CD8-positive, alpha-beta T cell (primary cell): ENCODE measurements at regions of chr16 and their contacts with region 1.

Region 1: GRCh38 chr16:81521151-81521626 is 76.6 kb downstream of the CMIP start:
- DNase-seq: peak; percentile 74 to 97 (median 87)
- ATAC-seq: peak; percentile 46
- H3K4me3 ChIP-seq: peak overlapping the region in 1 of 2 experiments; percentile 13
- H3K4me3 Mint-ChIP-seq: peak overlapping the region; percentile 3
- H3K27ac ChIP-seq: peak overlapping the region; percentile 54 to 95
- H3K27ac Mint-ChIP-seq: peak overlapping the region; percentile 96
- H3K4me1 ChIP-seq: peaks cover 35% of the 10 kb centered on the region
- H3K4me1 Mint-ChIP-seq: peaks cover 52% of the 10 kb centered on the region
- H3K27me3 ChIP-seq: no peaks in the 10 kb centered on the region
- H3K27me3 Mint-ChIP-seq: no peaks in the 10 kb centered on the region
- CTCF ChIP-seq: no peak

Region 2: GRCh38 chr16:81429045-81429521 is 92.1 kb before region 1 on chr16:
- CTCF ChIA-PET with region 1: interaction called, 3 read pairs
- POLR2A ChIA-PET with region 1: no interaction called
- intact Hi-C with region 1: loop called in 1 of 2 experiments (anchors 5 kb)
- DNase-seq: peak in 3 of 9 experiments; percentile 32 to 62 (median 46)
- ATAC-seq: peak; percentile 36
- H3K4me3 ChIP-seq: no peak overlapping the region
- H3K4me3 Mint-ChIP-seq: no peak overlapping the region
- H3K27ac ChIP-seq: no peak overlapping the region
- H3K27ac Mint-ChIP-seq: no peak overlapping the region
- H3K4me1 ChIP-seq: peaks cover 5% of the 10 kb centered on the region
- H3K4me1 Mint-ChIP-seq: peaks cover 11% of the 10 kb centered on the region
- H3K27me3 ChIP-seq: no peaks in the 10 kb centered on the region
- H3K27me3 Mint-ChIP-seq: peaks cover 2% of the 10 kb centered on the region
- CTCF ChIP-seq: no peak

Region 3: DNA sequence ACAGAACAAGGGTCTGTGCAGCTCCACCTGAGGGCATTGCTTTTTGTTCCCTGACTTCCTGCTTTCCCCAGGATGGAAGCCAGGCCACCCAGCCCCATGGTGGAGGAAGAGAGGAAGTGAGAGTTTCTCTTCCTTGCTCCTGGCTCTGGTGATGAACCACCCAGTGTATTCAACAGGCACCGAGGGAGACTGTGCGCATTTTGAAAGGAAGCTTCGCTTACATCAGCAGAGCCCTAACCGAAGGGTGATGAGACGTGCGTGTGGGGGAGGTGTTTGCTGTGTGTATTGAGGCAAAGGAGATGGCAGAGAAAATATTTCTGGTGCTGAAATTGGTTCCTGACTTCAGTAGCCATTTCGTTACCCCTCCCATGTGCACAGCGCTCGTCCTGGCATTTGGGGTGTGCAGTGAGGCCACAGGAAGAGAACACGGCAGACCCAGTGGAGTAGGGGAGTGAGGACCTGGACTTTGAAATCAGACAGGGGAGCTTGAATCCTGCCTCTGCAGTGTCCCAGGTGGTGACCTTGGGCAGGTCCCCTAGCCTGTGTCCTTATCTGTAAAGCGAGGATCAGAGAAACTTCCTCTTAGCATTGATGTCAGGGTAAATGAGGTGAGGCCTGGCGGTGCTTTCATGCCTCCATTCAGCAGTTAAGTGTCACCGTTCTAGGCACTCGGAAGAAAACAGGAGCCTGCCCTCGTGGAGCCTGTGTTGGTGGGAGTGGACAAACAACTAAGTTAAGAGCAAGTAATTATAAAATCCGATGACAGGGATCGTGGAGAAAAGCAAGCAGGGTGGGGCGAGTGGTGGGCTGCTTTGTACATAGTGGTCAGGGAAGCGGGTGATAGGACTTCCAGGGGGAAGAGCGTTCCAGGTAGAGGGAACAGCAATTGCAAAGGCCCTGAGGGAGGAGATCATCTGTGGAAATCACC is 69.2 kb before region 1 on chr16:
- CTCF ChIA-PET with region 1: no interaction called
- POLR2A ChIA-PET with region 1: no interaction called
- intact Hi-C with region 1: loop called in 1 of 2 experiments (anchors 2 kb)
- DNase-seq: peak in 6 of 9 experiments; percentile 21 to 76 (median 51)
- ATAC-seq: peak; percentile 91
- H3K4me3 ChIP-seq: no peak overlapping the region
- H3K4me3 Mint-ChIP-seq: peak overlapping the region; percentile 64
- H3K27ac ChIP-seq: peak overlapping the region in 1 of 2 experiments; percentile 36
- H3K27ac Mint-ChIP-seq: peak overlapping the region; percentile 87
- H3K4me1 ChIP-seq: peaks cover 59% of the 10 kb centered on the region
- H3K4me1 Mint-ChIP-seq: peaks cover 86% of the 10 kb centered on the region
- H3K27me3 ChIP-seq: no peaks in the 10 kb centered on the region
- H3K27me3 Mint-ChIP-seq: no peaks in the 10 kb centered on the region
- CTCF ChIP-seq: no peak

Region 4: DNA sequence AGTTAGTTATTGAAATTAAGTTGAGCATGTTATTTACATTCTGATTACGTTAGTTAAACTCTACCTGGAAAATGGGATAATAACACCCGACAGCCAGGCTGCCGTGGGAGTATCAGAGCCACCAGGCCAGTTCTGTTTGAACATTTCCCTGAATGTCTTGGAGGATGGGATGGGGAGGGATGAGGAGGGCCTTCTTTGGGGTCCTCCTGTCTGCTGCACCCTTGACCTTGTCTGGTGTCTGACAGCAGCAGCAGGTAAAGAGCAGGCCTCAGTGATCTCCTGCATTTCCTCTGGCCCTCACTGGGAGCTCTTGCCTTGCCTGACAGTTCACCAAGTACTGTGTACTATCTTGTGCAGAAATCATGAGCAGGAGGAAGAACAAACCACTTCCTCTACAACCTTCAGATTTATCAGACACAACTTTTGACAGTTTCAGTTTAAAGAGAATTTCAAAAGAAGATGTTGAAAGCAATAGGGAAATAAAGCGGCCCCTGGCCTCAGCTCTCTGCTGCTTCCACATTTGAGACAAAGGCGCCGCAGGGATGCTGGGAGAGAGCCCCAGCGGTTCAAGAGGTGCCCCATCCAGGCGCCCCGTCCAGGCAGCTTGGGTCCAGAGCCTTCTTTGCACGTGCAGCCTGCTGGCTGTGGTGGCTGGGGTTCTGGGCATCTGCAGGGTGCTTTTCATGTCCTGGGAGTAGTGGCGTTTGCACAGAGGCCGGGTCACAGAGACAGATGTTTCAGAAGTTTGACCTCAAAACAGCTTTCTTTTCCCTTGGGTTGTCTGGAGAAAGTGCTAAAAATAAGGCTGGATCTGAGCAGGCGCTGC is 51.3 kb before region 1 on chr16:
- CTCF ChIA-PET with region 1: interaction called, 3 read pairs
- POLR2A ChIA-PET with region 1: interaction called, 3 read pairs
- intact Hi-C with region 1: loop called in 1 of 2 experiments (anchors 5 kb)
- DNase-seq: peak in 7 of 9 experiments; percentile 19 to 80 (median 47)
- ATAC-seq: peak; percentile 88
- H3K4me3 ChIP-seq: peak overlapping the region; percentile 28 to 36
- H3K4me3 Mint-ChIP-seq: peak overlapping the region; percentile 64
- H3K27ac ChIP-seq: peak overlapping the region; percentile 43 to 73
- H3K27ac Mint-ChIP-seq: peak overlapping the region; percentile 91
- H3K4me1 ChIP-seq: peaks cover 67% of the 10 kb centered on the region
- H3K4me1 Mint-ChIP-seq: peaks cover 77% of the 10 kb centered on the region
- H3K27me3 ChIP-seq: no peaks in the 10 kb centered on the region
- H3K27me3 Mint-ChIP-seq: no peaks in the 10 kb centered on the region
- CTCF ChIP-seq: no peak

Region 5: DNA sequence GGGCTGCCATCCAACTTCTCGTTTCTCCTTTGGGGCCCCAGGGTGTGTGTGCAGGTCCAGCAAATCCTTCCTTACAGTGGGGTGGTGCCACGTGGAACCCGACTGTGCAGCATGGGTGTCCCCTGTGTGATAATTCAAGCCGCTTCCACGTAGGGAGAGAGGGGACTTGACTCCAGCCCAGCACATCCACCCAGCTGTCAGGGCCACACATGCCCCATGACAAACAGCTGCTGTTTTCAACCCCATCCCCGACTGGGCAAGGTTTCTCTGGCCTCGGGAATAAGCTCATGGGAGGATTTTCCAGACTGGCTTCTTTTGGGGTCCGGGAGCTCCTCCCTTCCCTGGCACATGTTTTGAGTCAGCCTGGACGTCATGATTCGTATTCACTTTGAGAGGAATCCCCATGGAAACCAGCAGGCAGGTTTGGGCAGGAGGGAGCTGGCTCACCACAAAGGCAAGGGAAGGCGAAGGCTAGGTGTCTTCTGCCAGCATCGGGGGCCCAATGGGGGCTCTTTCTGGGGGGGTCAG is 79.8 kb after region 1 on chr16:
- CTCF ChIA-PET with region 1: no interaction called
- POLR2A ChIA-PET with region 1: no interaction called
- intact Hi-C with region 1: no loop called
- DNase-seq: no peak
- ATAC-seq: no peak
- H3K4me3 ChIP-seq: no peak overlapping the region
- H3K4me3 Mint-ChIP-seq: no peak overlapping the region
- H3K27ac ChIP-seq: no peak overlapping the region
- H3K27ac Mint-ChIP-seq: no peak overlapping the region
- H3K4me1 ChIP-seq: no peaks in the 10 kb centered on the region
- H3K4me1 Mint-ChIP-seq: peaks cover 11% of the 10 kb centered on the region
- H3K27me3 ChIP-seq: no peaks in the 10 kb centered on the region
- H3K27me3 Mint-ChIP-seq: no peaks in the 10 kb centered on the region
- CTCF ChIP-seq: no peak

Region 6: GRCh38 chr16:81616321-81617055 is 95.3 kb after region 1 on chr16:
- CTCF ChIA-PET with region 1: no interaction called
- POLR2A ChIA-PET with region 1: interaction called, 6 read pairs
- intact Hi-C with region 1: loop called (anchors 1 to 5 kb)
- DNase-seq: peak; percentile 62 to 95 (median 80)
- ATAC-seq: peak; percentile 90
- H3K4me3 ChIP-seq: peak overlapping the region; percentile 13 to 35
- H3K4me3 Mint-ChIP-seq: peak overlapping the region; percentile 68
- H3K27ac ChIP-seq: peak overlapping the region; percentile 90 to 92
- H3K27ac Mint-ChIP-seq: peak overlapping the region; percentile 97
- H3K4me1 ChIP-seq: peaks cover 23% of the 10 kb centered on the region
- H3K4me1 Mint-ChIP-seq: peaks cover 16% of the 10 kb centered on the region
- H3K27me3 ChIP-seq: no peaks in the 10 kb centered on the region
- H3K27me3 Mint-ChIP-seq: no peaks in the 10 kb centered on the region
- CTCF ChIP-seq: no peak

Region 7: GRCh38 chr16:81715358-81716196 is 194.4 kb after region 1 on chr16:
- CTCF ChIA-PET with region 1: no interaction called
- POLR2A ChIA-PET with region 1: no interaction called
- intact Hi-C with region 1: loop called in 1 of 2 experiments (anchors 5 kb)
- DNase-seq: peak in 6 of 9 experiments; percentile 11 to 84 (median 42)
- ATAC-seq: peak; percentile 61
- H3K4me3 ChIP-seq: peak overlapping the region; percentile 8 to 26
- H3K4me3 Mint-ChIP-seq: peak overlapping the region; percentile 71
- H3K27ac ChIP-seq: peak overlapping the region in 1 of 2 experiments; percentile 70
- H3K27ac Mint-ChIP-seq: peak overlapping the region; percentile 92
- H3K4me1 ChIP-seq: peaks cover 28% of the 10 kb centered on the region
- H3K4me1 Mint-ChIP-seq: peaks cover 47% of the 10 kb centered on the region
- H3K27me3 ChIP-seq: no peaks in the 10 kb centered on the region
- H3K27me3 Mint-ChIP-seq: no peaks in the 10 kb centered on the region
- CTCF ChIP-seq: no peak

Region 8: GRCh38 chr16:82653550-82654511 is 1132.6 kb after region 1 on chr16:
- CTCF ChIA-PET with region 1: no interaction called
- POLR2A ChIA-PET with region 1: no interaction called
- intact Hi-C with region 1: loop called in 1 of 2 experiments (anchors 10 kb)
- DNase-seq: peak in 8 of 9 experiments; percentile 1 to 89 (median 34)
- ATAC-seq: peak; percentile 62
- H3K4me3 ChIP-seq: no peak overlapping the region
- H3K4me3 Mint-ChIP-seq: peak overlapping the region; percentile 58
- H3K27ac ChIP-seq: peak overlapping the region in 1 of 2 experiments; percentile 91
- H3K27ac Mint-ChIP-seq: peak overlapping the region; percentile 90
- H3K4me1 ChIP-seq: peaks cover 63% of the 10 kb centered on the region
- H3K4me1 Mint-ChIP-seq: peaks cover 88% of the 10 kb centered on the region
- H3K27me3 ChIP-seq: no peaks in the 10 kb centered on the region
- H3K27me3 Mint-ChIP-seq: no peaks in the 10 kb centered on the region
- CTCF ChIP-seq: no peak